Activated T-helper 2 cell treated with anti-CD3 and anti-CD28 coated beads, Interferon-gamma antibody, Interleukin-2, Interleukin-4, amounts not matched to agents 10 μg/mL and 5 μg/mL and 100 μg/mL, durations not matched to agents 14 hours and 24 hours and 36 hours (primary cell): ENCODE measurements at regions of chr6 and their contacts with region 1.

Region 1: DNA sequence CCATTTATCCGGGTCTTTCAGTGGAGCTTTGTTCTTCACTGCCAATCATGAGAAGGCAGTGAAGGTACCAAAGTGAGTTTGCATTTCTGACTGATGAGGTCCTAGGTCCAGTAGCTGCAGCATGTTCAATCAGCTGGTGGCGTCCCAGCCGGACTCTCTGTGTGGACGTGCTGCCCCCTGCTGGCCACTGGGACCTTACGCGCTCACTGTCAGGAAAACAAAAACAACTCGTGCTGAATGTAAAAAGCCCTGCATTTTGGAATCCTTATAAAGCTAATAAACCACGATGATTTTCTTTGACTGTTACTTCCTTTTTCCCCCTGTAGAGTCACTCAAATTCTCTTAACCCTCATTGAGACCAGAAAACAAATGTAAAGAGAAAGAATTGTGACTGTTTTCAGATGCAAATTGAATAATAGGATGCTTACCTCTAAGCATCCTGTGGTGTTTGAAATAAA is 4.9 kb upstream of the CD24 start:
- DNase-seq: peak; percentile 63
- H3K4me3 Mint-ChIP-seq: no peak overlapping the region
- H3K27ac Mint-ChIP-seq: no peak overlapping the region
- H3K4me1 Mint-ChIP-seq: peaks cover 5% of the 10 kb centered on the region
- H3K27me3 Mint-ChIP-seq: peaks cover 34% of the 10 kb centered on the region

Region 2: GRCh38 chr6:106339334-106340029 is 640.0 kb before region 1 on chr6:
- intact Hi-C with region 1: loop called (anchors 2 kb)
- DNase-seq: peak; percentile 40
- H3K4me3 Mint-ChIP-seq: no peak overlapping the region
- H3K27ac Mint-ChIP-seq: no peak overlapping the region
- H3K4me1 Mint-ChIP-seq: peaks cover 8% of the 10 kb centered on the region
- H3K27me3 Mint-ChIP-seq: peaks cover 22% of the 10 kb centered on the region

Region 3: GRCh38 chr6:106360410-106360988 is 619.0 kb before region 1 on chr6 and contains the start of gene CRYBG1:
- intact Hi-C with region 1: loop called (anchors 10 kb)
- DNase-seq: peak; percentile 55
- H3K4me3 Mint-ChIP-seq: peak within 1 kb of the TSS; percentile 79
- H3K27ac Mint-ChIP-seq: no peak within 1 kb of the TSS
- H3K4me1 Mint-ChIP-seq: peaks cover 9% of the 10 kb centered on the region
- H3K27me3 Mint-ChIP-seq: peaks cover 50% of the 10 kb centered on the region
- total RNA-seq, gene CRYBG1: 27.5 and 27.6 TPM in 2 replicates

Region 4: DNA sequence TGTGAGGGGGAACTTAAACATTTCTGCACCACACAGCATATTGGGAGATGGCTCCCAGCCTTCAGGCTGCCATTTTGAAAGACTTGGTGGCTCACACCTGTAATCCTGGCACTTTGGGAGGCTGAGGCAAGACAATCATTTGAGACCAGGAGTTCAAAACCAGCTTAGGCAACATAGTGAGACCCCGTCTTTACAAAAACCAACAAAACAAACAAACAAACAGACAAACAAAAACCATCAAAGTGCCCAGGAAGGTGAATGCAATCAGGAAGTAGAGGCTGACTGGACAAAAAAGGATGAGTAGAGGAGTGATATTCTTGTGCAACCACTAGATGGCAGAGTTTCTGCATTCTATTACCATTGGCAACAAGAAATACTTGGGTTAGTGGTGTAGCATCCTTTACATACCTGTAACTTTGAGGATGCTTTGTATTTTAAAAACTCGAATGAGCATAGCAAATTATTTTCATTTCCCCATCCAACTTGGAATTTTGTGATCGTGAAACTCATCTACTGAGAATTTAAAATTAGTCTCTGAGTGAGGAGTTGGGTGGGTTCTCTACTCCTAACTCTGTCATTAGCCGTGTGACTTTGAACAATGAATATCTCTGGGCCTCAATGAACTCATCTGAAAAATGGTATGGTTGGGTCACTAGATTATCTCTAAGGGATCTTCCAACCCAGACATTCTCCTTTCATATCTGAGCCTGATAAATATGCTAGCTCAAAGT is 534.5 kb before region 1 on chr6:
- intact Hi-C with region 1: loop called (anchors 1 kb)
- DNase-seq: peak; percentile 18
- H3K4me3 Mint-ChIP-seq: no peak overlapping the region
- H3K27ac Mint-ChIP-seq: no peak overlapping the region
- H3K4me1 Mint-ChIP-seq: peaks cover 22% of the 10 kb centered on the region
- H3K27me3 Mint-ChIP-seq: peaks cover 37% of the 10 kb centered on the region

Region 5: DNA sequence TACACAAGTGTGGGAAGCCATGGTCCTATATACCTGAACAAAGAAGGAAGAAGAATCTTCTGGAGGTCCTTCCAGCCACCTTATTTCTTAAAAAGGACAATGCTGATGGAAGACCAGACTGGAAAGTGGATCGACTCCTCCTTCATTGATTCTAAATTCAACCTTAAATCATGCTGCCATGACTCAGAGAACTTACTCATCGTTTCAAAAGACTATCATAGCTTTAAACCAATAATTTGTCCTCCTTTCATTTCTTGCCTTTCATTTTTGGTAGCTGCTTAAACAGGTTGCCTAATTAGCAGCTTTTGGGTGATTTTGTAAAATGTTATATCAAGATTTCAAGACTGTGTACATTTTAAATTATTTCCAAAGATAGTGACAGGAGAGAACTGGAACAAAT is 410.9 kb before region 1 on chr6:
- intact Hi-C with region 1: loop called (anchors 5 kb)
- DNase-seq: no peak
- H3K4me3 Mint-ChIP-seq: no peak overlapping the region
- H3K27ac Mint-ChIP-seq: peak overlapping the region; percentile 59
- H3K4me1 Mint-ChIP-seq: peaks cover 2% of the 10 kb centered on the region
- H3K27me3 Mint-ChIP-seq: no peaks in the 10 kb centered on the region

Region 6: GRCh38 chr6:106608062-106608668 is 371.3 kb before region 1 on chr6:
- intact Hi-C with region 1: loop called (anchors 2 kb)
- DNase-seq: peak; percentile 18
- H3K4me3 Mint-ChIP-seq: no peak overlapping the region
- H3K27ac Mint-ChIP-seq: no peak overlapping the region
- H3K4me1 Mint-ChIP-seq: peaks cover 29% of the 10 kb centered on the region
- H3K27me3 Mint-ChIP-seq: no peaks in the 10 kb centered on the region